Transverse colon (tissue), 4 donors: ENCODE measurements at regions of chr10 and their contacts with region 1.

Region 1: DNA sequence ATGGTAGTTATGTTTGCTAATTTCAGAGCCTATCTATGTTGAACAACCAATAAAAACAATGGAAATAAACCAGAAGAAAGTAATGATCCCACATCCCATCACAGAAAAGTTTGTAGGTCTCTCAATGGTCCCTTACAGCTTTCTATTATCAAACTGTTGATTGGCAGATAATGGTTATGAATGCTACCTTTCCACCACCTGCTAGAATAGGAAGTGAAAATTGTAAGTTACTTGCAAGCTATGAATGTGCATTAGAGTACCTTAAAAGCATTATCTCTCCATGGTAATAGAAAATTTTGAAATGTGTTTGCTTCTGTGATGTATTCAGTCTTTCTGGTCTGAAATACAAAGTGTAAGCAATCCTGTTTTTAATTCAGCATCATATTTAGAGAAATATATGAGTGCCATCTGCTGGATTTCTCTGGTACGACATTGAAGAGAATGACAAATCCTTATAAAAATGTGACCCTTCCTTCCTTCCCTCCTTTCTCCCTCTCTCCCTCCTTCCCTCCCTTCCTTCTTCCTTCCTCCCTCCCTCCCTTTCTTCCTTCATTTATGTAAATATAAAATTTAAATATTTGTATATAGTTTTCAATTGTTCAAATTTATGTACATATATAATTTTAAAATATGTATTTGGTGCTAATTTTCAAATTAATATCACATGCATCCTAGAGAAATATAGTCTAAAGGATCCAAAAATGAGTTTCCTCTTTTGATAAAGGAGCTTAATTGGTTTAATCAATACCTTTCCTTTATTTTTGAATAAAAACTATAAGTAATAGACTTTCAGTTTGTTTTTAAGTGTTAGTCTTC is 41.4 kb upstream of the PNLIPRP3 start:
- DNase-seq: no peak
- H3K4me3 ChIP-seq: no peak overlapping the region
- H3K27ac ChIP-seq: no peak overlapping the region
- H3K4me1 ChIP-seq: no peaks in the 10 kb centered on the region
- H3K27me3 ChIP-seq: no peaks in the 10 kb centered on the region
- CTCF ChIP-seq: peak; percentile 37 to 53 (median 47)
- EP300 ChIP-seq: no peak
- POLR2A ChIP-seq: no peak

Region 2: GRCh38 chr10:115171392-115171960 is 1214.7 kb before region 1 on chr10:
- in situ Hi-C with region 1: loop called in 1 of 4 experiments (anchors 25 kb)
- intact Hi-C with region 1: no loop called
- DNase-seq: no peak
- H3K4me3 ChIP-seq: no peak overlapping the region
- H3K27ac ChIP-seq: no peak overlapping the region
- H3K4me1 ChIP-seq: no peaks in the 10 kb centered on the region
- H3K27me3 ChIP-seq: no peaks in the 10 kb centered on the region
- CTCF ChIP-seq: peak in 4 of 5 experiments; percentile 15 to 38 (median 36)
- EP300 ChIP-seq: no peak
- POLR2A ChIP-seq: no peak

Region 3: DNA sequence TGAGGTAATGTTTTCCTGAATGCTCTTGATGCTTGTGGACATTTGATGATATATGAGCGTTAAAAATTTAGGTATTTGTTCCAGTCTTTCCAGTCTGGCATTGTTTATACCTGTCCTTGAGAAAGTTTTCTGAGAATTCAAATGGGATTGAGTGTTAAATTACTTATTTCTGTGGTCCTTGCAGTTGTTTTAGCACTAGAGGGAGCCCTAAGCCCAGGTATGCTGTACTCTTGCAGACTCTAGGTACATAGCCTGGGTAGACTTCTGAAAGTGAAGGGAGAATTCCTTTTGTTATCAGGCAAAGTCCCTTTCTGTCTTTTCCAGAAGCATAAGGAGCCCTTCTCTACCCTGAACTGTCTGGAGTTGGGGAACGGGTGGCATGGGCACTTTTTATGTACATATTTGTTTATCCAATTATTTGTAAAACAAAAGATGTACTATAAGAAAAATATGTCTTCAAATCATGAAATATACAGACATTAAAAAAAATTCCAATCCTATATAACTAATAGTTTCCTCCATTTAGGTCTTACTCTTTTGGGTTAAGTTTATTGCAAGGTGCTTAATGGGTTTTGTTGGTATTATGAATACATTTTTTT is 1030.9 kb before region 1 on chr10:
- in situ Hi-C with region 1: loop called in 1 of 4 experiments (anchors 10 kb)
- intact Hi-C with region 1: no loop called
- DNase-seq: peak; percentile 8
- H3K4me3 ChIP-seq: no peak overlapping the region
- H3K27ac ChIP-seq: no peak overlapping the region
- H3K4me1 ChIP-seq: no peaks in the 10 kb centered on the region
- H3K27me3 ChIP-seq: no peaks in the 10 kb centered on the region
- CTCF ChIP-seq: peak; percentile 38 to 50 (median 44)
- EP300 ChIP-seq: no peak
- POLR2A ChIP-seq: no peak

Region 4: DNA sequence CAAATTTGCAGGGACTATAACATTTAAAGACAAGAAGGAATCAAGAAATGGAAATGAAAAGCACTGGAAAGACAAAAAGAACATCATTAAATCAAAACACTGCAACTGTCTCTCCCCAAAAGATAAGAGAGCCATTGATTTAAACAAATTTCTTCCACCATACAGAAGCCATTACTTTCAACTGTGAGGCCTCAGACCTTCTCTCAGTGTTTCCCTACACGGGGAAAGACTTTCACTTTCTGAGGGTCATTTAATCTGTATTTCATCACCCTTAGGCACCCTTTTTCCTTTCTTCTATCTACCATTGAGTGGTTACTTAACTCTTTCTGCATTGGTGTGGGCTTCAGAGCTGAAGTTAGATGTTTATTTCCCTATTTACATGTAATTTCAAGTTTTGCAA is 14.5 kb before region 1 on chr10:
- in situ Hi-C with region 1: no loop called
- intact Hi-C with region 1: no loop called
- DNase-seq: no peak
- H3K4me3 ChIP-seq: no peak overlapping the region
- H3K27ac ChIP-seq: no peak overlapping the region
- H3K4me1 ChIP-seq: no peaks in the 10 kb centered on the region
- H3K27me3 ChIP-seq: no peaks in the 10 kb centered on the region
- CTCF ChIP-seq: no peak
- EP300 ChIP-seq: no peak
- POLR2A ChIP-seq: no peak

Region 5: GRCh38 chr10:116627386-116627933 is 241.3 kb after region 1 on chr10:
- in situ Hi-C with region 1: no loop called
- intact Hi-C with region 1: no loop called
- DNase-seq: peak; percentile 68
- H3K4me3 ChIP-seq: peak overlapping the region in 3 of 4 donors; percentile 32 to 47 (median 36)
- H3K27ac ChIP-seq: no peak overlapping the region
- H3K4me1 ChIP-seq: peaks cover 0 to 6% (median 0%) of the 10 kb centered on the region in 4 donors
- H3K27me3 ChIP-seq: peaks cover 7% of the 10 kb centered on the region
- CTCF ChIP-seq: peak; percentile 53 to 76 (median 54)
- EP300 ChIP-seq: no peak
- POLR2A ChIP-seq: no peak

Region 6: GRCh38 chr10:117318909-117319308 is 932.7 kb after region 1 on chr10:
- in situ Hi-C with region 1: no loop called
- intact Hi-C with region 1: loop called (anchors 5 kb)
- DNase-seq: no peak
- H3K4me3 ChIP-seq: no peak overlapping the region
- H3K27ac ChIP-seq: no peak overlapping the region
- H3K4me1 ChIP-seq: no peaks in the 10 kb centered on the region
- H3K27me3 ChIP-seq: no peaks in the 10 kb centered on the region
- CTCF ChIP-seq: peak in 3 of 5 experiments; percentile 6 to 33 (median 11)
- EP300 ChIP-seq: no peak
- POLR2A ChIP-seq: no peak